ENCODE measurements at regions of chr2 and their contacts with region 1.

Region 1: DNA sequence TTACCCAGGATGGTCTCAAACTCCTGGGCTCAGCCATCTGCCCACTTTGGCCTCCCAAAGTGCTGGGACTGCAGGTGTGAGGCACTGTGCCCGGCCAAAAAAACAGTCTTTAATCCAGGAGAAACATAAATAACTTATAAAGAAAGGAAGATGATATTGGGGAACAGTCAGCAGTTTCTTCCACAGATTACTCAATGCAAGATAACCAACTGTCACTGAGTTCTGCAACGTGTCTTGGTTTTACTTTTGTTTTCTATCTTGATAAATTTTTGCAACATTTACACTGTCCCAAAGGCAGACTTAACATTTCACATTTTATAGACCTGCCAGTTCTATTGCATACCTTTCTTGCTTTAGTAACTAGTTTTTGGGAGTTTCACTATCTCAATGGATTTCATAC is 71.1 kb downstream of the ANKRD44 start:
- DNase-seq: no peak
- H3K4me3 Mint-ChIP-seq: peak overlapping the region; percentile 78
- H3K27ac Mint-ChIP-seq: peak overlapping the region; percentile 92
- H3K4me1 Mint-ChIP-seq: peaks cover 83% of the 10 kb centered on the region
- H3K27me3 Mint-ChIP-seq: no peaks in the 10 kb centered on the region

Region 2: DNA sequence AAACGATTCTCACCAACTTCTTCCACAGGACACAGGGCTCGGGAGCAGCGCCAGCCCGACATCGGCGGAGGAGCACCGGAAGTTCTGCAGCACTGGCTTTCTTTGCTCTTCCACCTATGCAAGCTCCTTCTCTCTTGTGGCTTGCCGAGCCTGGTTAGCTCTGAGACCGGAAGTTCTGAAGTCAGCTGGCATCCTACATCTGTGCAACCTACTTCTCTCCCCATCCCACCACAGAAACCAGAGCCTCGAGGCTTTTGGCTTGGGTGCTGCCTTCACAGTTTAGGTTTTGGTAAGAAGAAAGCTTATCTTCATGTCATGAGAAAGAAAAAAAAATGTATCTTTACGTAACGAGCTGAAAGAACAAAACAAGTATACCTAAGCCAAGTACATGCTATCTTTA is 40.5 kb before region 1 on chr2:
- CTCF ChIA-PET with region 1: interaction called, 6 read pairs
- POLR2A ChIA-PET with region 1: interaction called, 7 read pairs
- intact Hi-C with region 1: loop called (anchors 1 kb)
- DNase-seq: peak; percentile 95
- H3K4me3 Mint-ChIP-seq: peak overlapping the region; percentile 80
- H3K27ac Mint-ChIP-seq: peak overlapping the region; percentile 93
- H3K4me1 Mint-ChIP-seq: peaks cover 90% of the 10 kb centered on the region
- H3K27me3 Mint-ChIP-seq: no peaks in the 10 kb centered on the region

Region 3: DNA sequence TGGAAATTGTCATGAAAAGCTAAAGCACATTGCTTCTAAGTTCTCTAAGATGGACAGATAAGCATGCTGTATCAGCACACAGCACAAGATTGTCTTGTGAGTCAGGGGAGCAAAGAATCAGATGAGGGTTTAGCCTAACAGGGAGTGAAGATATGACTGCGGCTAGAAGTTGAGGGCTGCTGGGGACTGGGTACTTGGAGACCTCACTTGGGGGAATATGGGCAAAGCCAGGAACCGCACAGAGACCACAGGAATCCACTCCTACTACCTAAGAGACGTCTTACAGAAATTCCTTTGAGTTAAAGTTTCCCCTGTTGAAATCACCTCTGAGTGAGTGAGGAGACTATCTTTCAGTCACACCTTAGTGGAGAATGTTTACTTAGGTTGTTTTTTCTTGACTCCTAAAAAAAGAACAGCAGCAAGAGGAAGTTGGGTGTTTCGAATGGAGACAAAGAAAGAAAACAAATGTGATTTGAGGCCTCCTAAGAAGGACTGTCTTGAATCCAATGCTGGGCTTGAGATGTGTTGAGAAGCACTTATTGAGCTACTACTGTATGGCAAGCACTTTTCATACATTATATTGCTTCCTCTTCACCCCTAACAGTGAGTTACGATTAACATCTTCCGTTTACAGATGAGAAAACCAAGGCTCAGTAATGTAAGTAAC is 29.6 kb before region 1 on chr2:
- CTCF ChIA-PET with region 1: interaction called, 11 read pairs
- POLR2A ChIA-PET with region 1: interaction called, 16 read pairs
- intact Hi-C with region 1: no loop called
- DNase-seq: peak; percentile 86
- H3K4me3 Mint-ChIP-seq: peak overlapping the region; percentile 58
- H3K27ac Mint-ChIP-seq: peak overlapping the region; percentile 94
- H3K4me1 Mint-ChIP-seq: peaks cover 98% of the 10 kb centered on the region
- H3K27me3 Mint-ChIP-seq: no peaks in the 10 kb centered on the region

Region 4: DNA sequence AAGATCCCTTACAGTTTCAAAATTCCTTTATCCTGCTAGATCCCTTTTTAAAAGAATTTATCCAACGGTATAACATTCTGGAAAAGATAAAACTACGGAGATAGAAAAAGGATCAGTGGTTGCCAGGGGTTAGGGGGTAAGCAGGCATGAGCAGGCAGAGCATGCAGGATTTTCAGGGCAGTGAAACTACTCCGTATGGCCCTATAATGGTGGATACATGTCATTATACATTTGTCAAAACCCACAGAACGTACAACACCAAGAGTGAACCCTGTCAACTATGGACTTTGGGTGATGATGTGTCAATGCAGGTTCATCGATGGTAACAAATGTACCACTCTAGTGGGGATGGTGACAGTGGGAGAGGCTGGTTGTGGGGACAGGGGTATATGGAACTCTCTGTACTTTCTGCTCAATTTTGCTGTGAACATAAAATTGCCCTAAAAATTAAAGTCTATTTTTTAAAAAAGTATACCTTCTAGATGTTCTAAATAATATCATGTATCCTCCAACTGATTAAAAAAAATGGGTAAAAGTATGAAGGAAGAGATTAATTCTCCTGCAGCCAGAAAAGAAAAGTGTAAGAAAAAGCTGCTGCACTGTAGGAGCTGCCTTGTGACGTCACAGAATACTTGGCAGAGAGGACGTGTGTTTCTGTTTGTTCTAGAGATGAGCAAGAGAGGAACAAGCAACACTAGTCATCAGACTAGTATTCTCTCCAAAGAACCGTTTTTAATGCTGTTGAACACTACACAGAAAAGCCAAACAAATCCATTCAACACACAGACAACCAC is 47.6 kb after region 1 on chr2:
- CTCF ChIA-PET with region 1: no interaction called
- POLR2A ChIA-PET with region 1: no interaction called
- intact Hi-C with region 1: loop called (anchors 1 kb)
- DNase-seq: peak; percentile 64
- H3K4me3 Mint-ChIP-seq: peak overlapping the region; percentile 73
- H3K27ac Mint-ChIP-seq: peak overlapping the region; percentile 95
- H3K4me1 Mint-ChIP-seq: peaks cover 78% of the 10 kb centered on the region
- H3K27me3 Mint-ChIP-seq: no peaks in the 10 kb centered on the region

Region 5: GRCh38 chr2:197293252-197294007 is 54.0 kb after region 1 on chr2:
- CTCF ChIA-PET with region 1: no interaction called
- POLR2A ChIA-PET with region 1: no interaction called
- intact Hi-C with region 1: loop called (anchors 1 kb)
- DNase-seq: peak; percentile 41
- H3K4me3 Mint-ChIP-seq: peak overlapping the region; percentile 74
- H3K27ac Mint-ChIP-seq: peak overlapping the region; percentile 100
- H3K4me1 Mint-ChIP-seq: peaks cover 89% of the 10 kb centered on the region
- H3K27me3 Mint-ChIP-seq: no peaks in the 10 kb centered on the region

Region 6: DNA sequence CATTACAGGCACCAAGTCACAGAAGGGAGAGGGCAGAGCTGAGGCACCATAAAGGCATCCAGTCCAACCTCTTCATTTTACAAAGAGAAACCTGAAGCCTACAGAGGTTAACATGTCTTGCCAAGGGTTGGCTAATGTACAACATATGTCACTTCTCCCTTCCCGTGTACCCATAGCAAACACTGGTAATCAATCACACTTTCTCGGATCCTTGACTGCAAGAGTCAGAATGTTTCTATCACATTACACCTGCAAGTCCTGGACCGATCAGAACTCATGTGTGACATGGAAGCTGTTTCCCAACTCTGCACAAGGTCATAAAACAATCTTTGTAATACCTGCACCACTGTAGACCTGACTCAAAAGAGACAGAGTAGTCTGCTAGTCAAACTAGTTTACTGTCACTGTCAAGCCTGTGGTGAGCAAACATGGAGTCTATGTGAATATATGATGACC is 65.2 kb after region 1 on chr2:
- CTCF ChIA-PET with region 1: interaction called, 3 read pairs
- POLR2A ChIA-PET with region 1: interaction called, 15 read pairs
- intact Hi-C with region 1: loop called (anchors 1 kb)
- DNase-seq: peak; percentile 62
- H3K4me3 Mint-ChIP-seq: peak overlapping the region; percentile 95
- H3K27ac Mint-ChIP-seq: peak overlapping the region; percentile 99
- H3K4me1 Mint-ChIP-seq: peaks cover 83% of the 10 kb centered on the region
- H3K27me3 Mint-ChIP-seq: no peaks in the 10 kb centered on the region